Naive thymus-derived CD8-positive, alpha-beta T cell (primary cell): ENCODE measurements at regions of chrX and their contacts with region 1.

Region 1: DNA sequence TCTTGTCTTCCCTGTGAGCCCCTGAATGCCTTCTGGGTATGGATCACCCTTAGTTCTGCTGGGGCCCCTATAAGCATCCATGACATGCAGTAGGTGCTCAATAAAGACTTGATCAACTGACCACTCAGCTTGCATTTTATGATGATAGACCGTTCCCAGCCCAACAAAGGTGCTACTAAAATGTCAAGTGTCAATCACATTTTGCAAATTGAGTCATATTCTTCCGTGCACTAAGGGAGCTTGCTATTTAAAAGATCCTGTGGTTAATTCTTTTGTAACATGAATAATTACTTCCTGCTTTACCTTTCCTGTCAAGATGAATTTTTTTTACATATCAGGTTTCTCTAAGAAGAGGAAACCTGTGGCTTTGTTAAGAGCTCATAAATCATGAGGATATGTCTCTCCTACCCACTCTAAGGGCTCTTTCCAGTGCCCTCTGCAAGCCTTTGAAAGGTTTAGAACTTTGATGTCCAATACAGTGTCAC is 47.6 kb downstream of the SH3KBP1 start:
- DNase-seq: peak in 3 of 10 donors; percentile 29 to 51 (median 49)
- ATAC-seq: peak; percentile 75 to 77
- H3K4me3 Mint-ChIP-seq: peak overlapping the region; percentile 2 to 87 (median 62)
- H3K27ac Mint-ChIP-seq: peak overlapping the region in 9 of 10 donors; percentile 77 to 92 (median 87)
- H3K4me1 Mint-ChIP-seq: peaks cover 10 to 76% (median 51%) of the 10 kb centered on the region in 4 donors
- H3K27me3 Mint-ChIP-seq: no peaks in the 10 kb centered on the region

Region 2: DNA sequence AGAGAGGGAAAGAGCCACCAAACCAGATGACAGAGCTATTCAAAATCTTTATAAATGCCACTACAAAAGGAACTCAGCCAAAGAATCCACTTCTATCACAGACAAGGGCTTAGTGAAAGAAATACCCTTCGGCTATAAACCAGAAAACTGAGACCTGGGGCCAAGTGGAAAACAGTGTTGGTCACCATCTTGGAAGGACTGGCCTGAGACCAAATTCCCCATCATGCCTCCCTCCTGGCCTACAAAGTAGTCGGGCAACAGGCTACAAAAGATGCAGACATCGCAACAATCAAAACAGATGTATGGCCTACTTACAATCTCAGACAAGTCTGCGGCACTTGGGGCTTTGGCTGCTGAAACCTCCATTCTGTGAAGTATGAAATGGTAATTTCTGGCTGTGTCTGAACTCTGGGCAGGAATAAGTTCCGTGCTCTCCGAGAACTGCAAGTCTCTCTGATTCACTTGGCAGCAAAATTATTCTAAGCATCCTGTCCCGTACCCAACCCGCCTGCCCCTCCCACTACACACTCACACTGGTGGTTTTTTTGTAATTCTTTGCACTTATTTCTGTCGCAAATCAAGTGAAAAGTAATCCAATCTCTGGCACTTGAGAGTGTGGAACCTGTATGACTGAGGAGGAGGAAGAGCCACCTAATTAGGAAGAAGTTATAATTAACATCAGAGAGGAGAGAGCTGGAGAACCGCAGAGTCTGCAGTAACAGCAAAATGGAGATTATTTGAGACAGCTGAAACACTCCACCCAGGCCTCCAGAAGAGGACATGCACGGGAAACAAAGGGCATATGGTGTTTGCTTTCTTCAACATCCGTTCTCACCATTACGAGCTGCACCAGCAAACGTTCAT is 40.3 kb before region 1 on chrX:
- POLR2A ChIA-PET with region 1: interaction called, 11 read pairs
- DNase-seq: peak in 8 of 10 donors; percentile 22 to 71 (median 48)
- ATAC-seq: peak; percentile 79 to 83
- H3K4me3 Mint-ChIP-seq: peak overlapping the region; percentile 82 to 98 (median 94)
- H3K27ac Mint-ChIP-seq: peak overlapping the region; percentile 88 to 98 (median 94)
- H3K4me1 Mint-ChIP-seq: peaks cover 22 to 77% (median 64%) of the 10 kb centered on the region in 4 donors
- H3K27me3 Mint-ChIP-seq: no peaks in the 10 kb centered on the region

Region 3: DNA sequence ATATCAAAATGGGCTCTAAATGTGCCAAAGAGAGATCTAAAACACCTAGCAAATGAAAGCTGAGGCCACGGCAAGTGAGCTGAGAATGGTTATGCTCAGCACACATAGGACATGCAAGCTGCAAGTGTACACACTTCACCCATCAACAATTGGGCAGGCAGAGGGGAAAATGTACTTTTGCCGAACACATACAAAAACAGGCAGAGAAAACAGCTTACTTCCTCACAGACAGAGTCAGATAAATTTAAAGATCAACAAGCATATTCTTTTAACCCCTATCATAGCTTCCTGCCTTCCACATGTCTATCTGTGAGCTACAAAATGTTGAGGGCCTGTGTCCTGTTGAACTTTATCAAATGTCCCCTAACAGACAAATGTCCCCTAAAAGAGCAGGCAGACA is 12.7 kb before region 1 on chrX:
- POLR2A ChIA-PET with region 1: interaction called, 10 read pairs
- DNase-seq: peak in 1 of 10 donors; percentile 20
- ATAC-seq: peak; percentile 36 to 54
- H3K4me3 Mint-ChIP-seq: peak overlapping the region; percentile 26 to 81 (median 71)
- H3K27ac Mint-ChIP-seq: peak overlapping the region; percentile 64 to 97 (median 88)
- H3K4me1 Mint-ChIP-seq: peaks cover 12 to 52% (median 34%) of the 10 kb centered on the region in 4 donors
- H3K27me3 Mint-ChIP-seq: no peaks in the 10 kb centered on the region